GM12878 (cell line): ENCODE measurements at regions of chr2 and their contacts with region 1.

Region 1: GRCh38 chr2:8986327-8986976 is 17.0 kb downstream of the MBOAT2 start:
- DNase-seq: no peak
- ATAC-seq: peak; percentile 65
- H3K4me3 ChIP-seq: no peak overlapping the region
- H3K27ac ChIP-seq: no peak overlapping the region
- H3K4me1 ChIP-seq: peaks cover 23% of the 10 kb centered on the region
- H3K27me3 ChIP-seq: no peaks in the 10 kb centered on the region
- CTCF ChIP-seq: peak; percentile 38 to 69 (median 52); a peak in 5 of 6 replicates
- EP300 ChIP-seq: no peak
- POLR2A ChIP-seq: no peak
- RAD21 ChIP-seq: 0 out of 2 replicates have a peak, but pooled peaks have one; percentile 10

Region 2: DNA sequence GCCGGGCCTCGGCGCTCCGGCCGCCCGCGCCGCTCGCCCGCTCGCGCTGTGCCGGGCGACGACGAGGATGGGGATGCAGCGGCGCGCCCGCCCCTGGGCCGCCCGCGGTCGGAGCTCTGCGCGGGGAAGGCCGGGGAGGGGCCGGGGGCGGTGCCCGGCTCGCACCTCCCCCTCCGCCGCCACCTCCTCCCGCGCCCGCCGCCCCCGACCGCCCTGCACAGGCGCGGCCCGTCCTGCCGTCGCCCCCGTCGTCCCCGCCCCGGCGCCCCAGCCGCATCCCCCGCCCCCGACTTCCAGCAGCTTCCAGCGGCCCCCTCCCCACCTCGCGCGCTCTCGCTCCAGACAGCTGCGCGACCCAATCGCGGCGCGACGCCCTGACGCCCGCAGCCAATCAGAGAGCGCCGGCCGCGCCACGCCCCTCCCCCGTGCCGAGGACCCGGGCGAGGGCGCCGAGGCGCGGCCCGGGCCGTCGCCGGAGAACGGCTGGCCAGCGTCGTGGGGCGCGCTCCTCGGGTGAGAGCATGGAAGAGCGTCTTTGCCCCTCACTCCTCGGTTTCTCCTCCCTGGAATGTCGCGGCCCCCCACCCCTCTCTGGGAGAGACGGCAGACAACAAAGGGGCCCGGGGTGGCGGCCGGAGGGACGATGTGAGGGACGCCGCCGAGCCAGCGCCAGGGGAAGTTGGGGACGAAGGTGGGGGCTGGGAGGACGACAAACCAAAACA is 17.3 kb after region 1 on chr2 and contains the start of gene MBOAT2:
- CTCF ChIA-PET with region 1: interaction called, 8 read pairs
- POLR2A ChIA-PET with region 1: interaction called, 18 read pairs
- RAD21 ChIA-PET with region 1: interaction called, 19 read pairs
- SMC1A ChIA-PET with region 1: interaction called, 101 read pairs
- in situ Hi-C with region 1: no loop called
- intact Hi-C with region 1: no loop called
- DNase-seq: peak; percentile 43
- ATAC-seq: peak; percentile 92
- H3K4me3 ChIP-seq: peak within 1 kb of the TSS; percentile 71
- H3K27ac ChIP-seq: peak within 1 kb of the TSS; percentile 66
- H3K4me1 ChIP-seq: no peaks in the 10 kb centered on the region; the same call in 1 of the 2 replicates
- H3K27me3 ChIP-seq: no peaks in the 10 kb centered on the region; a peak in 1 of 4 replicates
- CTCF ChIP-seq: no peak
- EP300 ChIP-seq: no peak
- POLR2A ChIP-seq: peak; percentile 79
- RAD21 ChIP-seq: no peak
- polyA plus RNA-seq, gene MBOAT2: 0.08 to 1.3 TPM